ENCODE measurements at regions of chr2 and their contacts with region 1.

Region 1: GRCh38 chr2:64644177-64645004 is 9.3 kb downstream of the SERTAD2 start:
- DNase-seq: peak; percentile 84
- H3K4me3 ChIP-seq: peak overlapping the region; percentile 3 to 53 (median 30)
- H3K27ac ChIP-seq: peak overlapping the region; percentile 87
- H3K4me1 ChIP-seq: peaks cover 29% of the 10 kb centered on the region
- H3K27me3 ChIP-seq: no peaks in the 10 kb centered on the region
- CTCF ChIP-seq: no peak
- POLR2A ChIP-seq: no peak

Region 2: GRCh38 chr2:64144057-64145013 is 500.1 kb before region 1 on chr2 and contains the start of gene PELI1:
- CTCF ChIA-PET with region 1: no interaction called
- POLR2A ChIA-PET with region 1: no interaction called
- dilution Hi-C with region 1: no loop called
- intact Hi-C with region 1: loop called (anchors 10 kb)
- DNase-seq: peak; percentile 99
- H3K4me3 ChIP-seq: peak within 1 kb of the TSS; percentile 70 to 90 (median 83)
- H3K27ac ChIP-seq: peak within 1 kb of the TSS; percentile 74
- H3K4me1 ChIP-seq: peaks cover 18% of the 10 kb centered on the region
- H3K27me3 ChIP-seq: peaks cover 0 to 4% of the 10 kb centered on the region in 2 experiments
- CTCF ChIP-seq: peak in 1 of 2 donors; percentile 34
- POLR2A ChIP-seq: peak; percentile 95
- total RNA-seq, gene PELI1: 30.9 and 39.9 TPM in 2 replicates

Region 3: DNA sequence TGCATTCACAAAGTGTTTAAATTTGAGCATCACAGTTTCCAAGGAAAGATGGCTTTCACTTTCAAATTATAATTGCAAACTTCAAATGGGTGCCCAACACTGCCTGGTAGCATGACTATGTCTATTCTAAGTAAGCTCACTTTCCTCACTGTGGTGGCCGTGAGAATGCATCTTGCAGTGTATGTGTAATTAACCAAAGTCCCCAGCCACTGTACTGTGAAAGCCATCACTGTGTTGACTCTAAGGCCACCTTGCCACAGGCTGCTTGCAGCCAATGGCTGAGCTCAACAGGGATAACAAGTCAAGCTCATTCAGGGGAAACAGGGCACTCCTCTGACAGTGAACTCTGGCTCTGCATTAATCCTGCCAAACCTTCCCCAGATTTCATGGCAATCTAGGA is 233.7 kb before region 1 on chr2:
- CTCF ChIA-PET with region 1: no interaction called
- POLR2A ChIA-PET with region 1: no interaction called
- dilution Hi-C with region 1: no loop called
- intact Hi-C with region 1: no loop called
- DNase-seq: no peak
- H3K4me3 ChIP-seq: no peak overlapping the region
- H3K27ac ChIP-seq: no peak overlapping the region
- H3K4me1 ChIP-seq: peaks cover 3% of the 10 kb centered on the region
- H3K27me3 ChIP-seq: peaks cover 36 to 42% of the 10 kb centered on the region in 2 experiments
- CTCF ChIP-seq: no peak
- POLR2A ChIP-seq: no peak

Region 4: DNA sequence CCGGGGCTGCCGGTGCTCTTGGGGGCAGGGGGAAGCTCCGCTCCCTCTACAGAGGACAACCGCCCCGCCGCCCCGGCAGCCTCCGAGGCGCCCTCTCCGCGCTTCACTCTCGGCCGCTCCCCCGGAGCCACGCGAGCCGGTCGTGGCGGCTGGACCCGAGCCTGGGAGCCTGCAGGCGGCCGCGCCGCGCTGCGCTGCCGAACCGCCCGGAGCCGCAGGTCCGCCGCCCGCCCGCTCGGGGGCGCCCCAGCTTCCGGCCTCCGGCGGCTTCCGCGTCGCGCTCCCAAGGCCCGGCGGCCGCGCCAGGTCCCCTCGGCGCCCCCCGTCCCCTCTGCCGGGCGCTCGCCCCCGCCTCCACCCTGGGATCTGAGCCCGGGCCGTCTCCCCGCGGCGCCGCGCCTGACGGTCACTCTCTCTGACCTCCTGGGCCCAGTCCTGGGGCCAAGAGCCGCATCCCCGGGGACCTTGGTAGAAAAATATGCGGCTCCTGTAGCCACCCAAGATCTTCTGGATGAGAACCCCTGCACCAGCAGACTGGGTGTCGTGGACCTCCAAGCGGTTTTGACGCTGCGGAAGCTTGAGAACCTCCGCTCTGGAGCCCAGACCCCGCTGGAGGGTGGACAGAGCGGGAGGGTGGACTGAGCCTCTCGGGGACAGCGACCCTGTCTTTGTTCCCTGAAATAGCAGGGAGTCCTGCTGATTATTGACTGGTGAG is 35.0 kb before region 1 on chr2:
- CTCF ChIA-PET with region 1: interaction called, 15 read pairs
- POLR2A ChIA-PET with region 1: no interaction called
- dilution Hi-C with region 1: no loop called
- intact Hi-C with region 1: loop called (anchors 2 kb)
- DNase-seq: peak; percentile 31
- H3K4me3 ChIP-seq: peak overlapping the region in 2 of 3 experiments; percentile 30 to 39
- H3K27ac ChIP-seq: no peak overlapping the region
- H3K4me1 ChIP-seq: no peaks in the 10 kb centered on the region
- H3K27me3 ChIP-seq: peaks cover 0 to 2% of the 10 kb centered on the region in 2 experiments
- CTCF ChIP-seq: peak; percentile 14 to 49
- POLR2A ChIP-seq: no peak

Region 5: DNA sequence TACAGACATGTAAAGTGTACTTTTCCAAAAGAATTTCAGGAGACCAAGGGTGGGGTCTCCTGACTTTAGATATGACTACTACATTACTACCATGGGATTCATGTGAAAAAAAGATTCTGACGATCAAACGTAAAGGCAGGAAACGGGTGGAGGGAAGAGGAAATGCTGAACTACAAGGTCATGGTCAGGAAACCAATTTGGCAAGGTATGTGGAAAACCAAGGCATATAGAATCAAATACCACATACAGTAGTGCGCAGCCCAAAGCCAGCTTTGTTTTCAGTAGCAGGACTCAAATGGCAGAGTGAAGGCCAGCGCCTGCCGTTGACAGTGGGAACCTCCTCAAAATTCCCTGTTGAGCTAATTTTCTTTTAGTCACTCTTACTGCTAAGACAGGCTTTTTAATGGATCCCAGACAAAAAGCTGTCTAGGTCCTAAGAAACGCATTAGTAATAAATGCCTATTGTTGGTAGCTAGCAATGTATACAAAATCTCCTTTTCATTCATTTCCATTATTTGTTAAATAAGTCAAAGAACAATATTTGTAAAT is 66.9 kb after region 1 on chr2:
- CTCF ChIA-PET with region 1: interaction called, 46 read pairs
- POLR2A ChIA-PET with region 1: no interaction called
- dilution Hi-C with region 1: no loop called
- intact Hi-C with region 1: no loop called
- DNase-seq: peak; percentile 95
- H3K4me3 ChIP-seq: no peak overlapping the region
- H3K27ac ChIP-seq: peak overlapping the region; percentile 54
- H3K4me1 ChIP-seq: peaks cover 12% of the 10 kb centered on the region
- H3K27me3 ChIP-seq: no peaks in the 10 kb centered on the region
- CTCF ChIP-seq: peak in 1 of 2 donors; percentile 7
- POLR2A ChIP-seq: peak; percentile 27

Region 6: GRCh38 chr2:64767670-64768468 is 123.5 kb after region 1 on chr2:
- CTCF ChIA-PET with region 1: interaction called, 10 read pairs
- POLR2A ChIA-PET with region 1: interaction called, 3 read pairs
- dilution Hi-C with region 1: no loop called
- intact Hi-C with region 1: loop called (anchors 1 kb)
- DNase-seq: peak; percentile 87
- H3K4me3 ChIP-seq: peak overlapping the region; percentile 57 to 80 (median 75)
- H3K27ac ChIP-seq: peak overlapping the region; percentile 87
- H3K4me1 ChIP-seq: peaks cover 12% of the 10 kb centered on the region
- H3K27me3 ChIP-seq: no peaks in the 10 kb centered on the region
- CTCF ChIP-seq: no peak
- POLR2A ChIP-seq: peak; percentile 76

Region 7: GRCh38 chr2:64865073-64865830 is 220.9 kb after region 1 on chr2:
- CTCF ChIA-PET with region 1: interaction called, 105 read pairs
- POLR2A ChIA-PET with region 1: interaction called, 5 read pairs
- dilution Hi-C with region 1: no loop called
- intact Hi-C with region 1: loop called (anchors 1 kb)
- DNase-seq: peak; percentile 71
- H3K4me3 ChIP-seq: peak overlapping the region; percentile 42 to 46 (median 44)
- H3K27ac ChIP-seq: peak overlapping the region; percentile 66
- H3K4me1 ChIP-seq: peaks cover 6% of the 10 kb centered on the region
- H3K27me3 ChIP-seq: no peaks in the 10 kb centered on the region
- CTCF ChIP-seq: peak; percentile 43 to 94
- POLR2A ChIP-seq: no peak

Region 8: DNA sequence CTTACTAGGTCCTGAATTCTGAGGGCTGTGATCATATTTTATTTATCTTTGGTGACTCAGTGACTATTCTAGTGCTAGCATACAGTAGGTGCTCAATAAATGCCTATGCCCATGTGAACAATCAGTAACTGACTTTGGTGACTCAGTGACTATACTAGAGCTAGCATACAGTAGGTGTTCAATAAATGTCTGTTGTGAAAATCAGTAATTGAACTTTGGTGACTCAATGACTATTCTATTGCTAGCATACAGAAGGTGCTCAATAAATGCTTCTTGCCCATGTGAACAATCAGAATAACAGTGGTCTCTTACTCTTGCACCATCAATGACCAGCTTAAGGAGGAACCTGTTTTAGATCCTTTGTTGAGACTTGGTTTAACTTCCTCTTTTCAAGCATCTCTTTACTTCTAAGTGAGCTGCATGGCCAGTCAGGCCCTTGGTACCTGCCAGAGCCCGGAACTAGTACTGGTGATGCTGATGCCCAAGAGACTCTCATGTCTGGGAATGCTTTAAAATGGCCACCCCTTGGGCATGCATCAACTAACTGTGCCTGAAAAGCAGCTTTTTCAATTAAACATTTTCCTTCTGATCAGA is 1003.0 kb after region 1 on chr2:
- CTCF ChIA-PET with region 1: no interaction called
- POLR2A ChIA-PET with region 1: no interaction called
- dilution Hi-C with region 1: no loop called
- intact Hi-C with region 1: no loop called
- DNase-seq: no peak
- H3K4me3 ChIP-seq: no peak overlapping the region
- H3K27ac ChIP-seq: no peak overlapping the region
- H3K4me1 ChIP-seq: no peaks in the 10 kb centered on the region
- H3K27me3 ChIP-seq: peaks cover 0 to 1% of the 10 kb centered on the region in 2 experiments
- CTCF ChIP-seq: no peak
- POLR2A ChIP-seq: no peak

Measured in endothelial cell of umbilical vein (primary cell).